Ovary (tissue), 10 donors: ENCODE measurements at regions of chr11 and their contacts with region 1.

Region 1: DNA sequence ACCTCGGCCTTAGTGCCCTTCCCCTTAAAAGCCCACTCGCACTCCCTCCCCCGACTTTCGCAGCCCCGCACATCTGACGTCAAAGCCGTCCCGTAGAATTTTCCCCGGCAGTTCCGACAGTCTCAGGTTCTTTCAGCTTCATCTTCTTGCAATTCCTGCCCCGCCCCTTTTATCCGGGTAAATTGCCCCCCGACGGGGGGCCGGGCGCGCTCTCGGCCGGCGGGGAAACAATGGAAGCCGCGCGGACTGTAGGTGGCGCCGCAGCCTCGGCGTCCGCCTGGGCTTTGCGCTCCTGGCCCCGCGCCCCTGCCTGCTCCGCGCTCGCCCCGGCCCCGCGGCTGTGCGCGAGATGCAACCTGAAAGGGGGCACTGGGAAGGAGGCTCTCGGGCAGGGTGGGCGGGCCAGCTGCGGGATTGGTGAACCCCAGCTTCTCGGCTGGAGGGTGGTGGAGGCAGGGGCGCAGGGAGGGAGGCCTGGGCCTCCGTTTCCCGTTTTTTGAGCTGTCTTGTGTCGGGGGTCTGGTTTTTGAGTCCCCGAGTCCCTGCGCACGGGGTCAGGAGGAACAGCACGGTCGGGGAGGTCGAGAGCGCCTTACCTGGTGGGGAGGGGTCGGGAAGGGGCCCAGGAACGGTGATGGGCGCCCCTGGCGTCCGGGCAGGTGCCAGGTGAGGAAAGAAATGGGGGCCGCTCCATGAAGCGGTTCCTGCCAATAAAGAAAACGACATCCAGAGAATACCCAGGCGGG is 859 bp upstream of the FGF19 start:
- DNase-seq: no peak
- H3K4me3 ChIP-seq: no peak overlapping the region
- H3K27ac ChIP-seq: no peak overlapping the region
- H3K4me1 ChIP-seq: no peaks in the 10 kb centered on the region
- H3K27me3 ChIP-seq: no peaks in the 10 kb centered on the region
- CTCF ChIP-seq: no peak
- EP300 ChIP-seq: no peak
- POLR2A ChIP-seq: no peak

Region 2: GRCh38 chr11:69888483-69889076 is 183.9 kb after region 1 on chr11:
- intact Hi-C with region 1: loop called in 2 of 4 experiments (anchors 10 kb)
- DNase-seq: peak in 4 of 5 donors; percentile 31 to 63 (median 38)
- H3K4me3 ChIP-seq: no peak overlapping the region
- H3K27ac ChIP-seq: no peak overlapping the region
- H3K4me1 ChIP-seq: no peaks in the 10 kb centered on the region
- H3K27me3 ChIP-seq: no peaks in the 10 kb centered on the region
- CTCF ChIP-seq: peak in 1 of 3 donors; percentile 36
- EP300 ChIP-seq: no peak
- POLR2A ChIP-seq: no peak